Activated CD8-positive, alpha-beta T cell treated with anti-CD3 and anti-CD28 coated beads, Interleukin-2, amount 10 ng/mL, durations not matched to agents 7 days and 5 days (primary cell): ENCODE measurements at regions of chr1 and their contacts with region 1.

Region 1: DNA sequence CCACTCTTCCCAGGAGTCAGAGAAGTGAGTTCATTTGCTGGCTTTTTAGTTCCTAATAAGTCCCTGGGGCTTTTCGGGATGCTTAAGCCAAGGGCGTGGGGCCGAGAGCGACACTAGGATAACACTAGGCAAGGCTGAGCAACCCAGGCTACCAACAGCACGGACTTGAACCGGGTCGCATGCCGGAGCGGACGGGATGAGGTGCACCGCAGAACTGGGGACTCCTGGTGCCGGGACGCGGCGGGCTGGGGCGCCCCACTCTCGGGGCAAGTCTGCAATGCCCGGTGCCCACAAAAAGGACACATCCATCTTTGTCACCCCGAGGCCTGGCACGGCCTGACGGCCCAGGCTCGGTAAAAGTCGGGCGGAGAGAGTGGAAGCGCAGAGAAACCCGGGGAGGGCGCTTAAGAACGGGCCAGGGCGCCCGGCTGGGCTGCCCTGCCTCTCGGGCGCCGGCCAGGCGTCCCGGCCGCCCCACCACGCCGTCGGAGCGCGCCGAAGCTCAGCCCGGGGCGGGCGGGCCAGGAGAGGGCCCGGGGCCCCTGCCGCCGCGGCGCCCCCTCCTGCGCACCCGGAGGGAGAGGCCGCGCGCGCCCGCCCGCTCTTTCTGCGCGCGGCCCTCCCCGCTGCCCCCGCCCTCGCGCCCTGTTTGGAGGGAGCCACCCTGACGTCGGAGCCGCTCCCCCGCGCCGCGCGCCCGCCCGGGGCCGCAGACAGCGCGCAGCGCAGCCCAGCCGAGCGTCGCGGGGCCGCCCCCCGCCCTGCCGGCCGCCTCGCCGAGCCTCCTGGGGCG is at the start of gene NBL1:
- DNase-seq: peak; percentile 82
- ATAC-seq: peak; percentile 87
- H3K4me3 Mint-ChIP-seq: peak within 1 kb of the TSS; percentile 93
- H3K27ac Mint-ChIP-seq: peak within 1 kb of the TSS; percentile 93
- H3K4me1 Mint-ChIP-seq: peaks cover 44% of the 10 kb centered on the region
- H3K27me3 Mint-ChIP-seq: peaks cover 14% of the 10 kb centered on the region
- total RNA-seq, gene NBL1: 40.1 TPM

Region 2: GRCh38 chr1:19606817-19607642 is 36.8 kb before region 1 on chr1:
- CTCF ChIA-PET with region 1: interaction called, 3 read pairs
- POLR2A ChIA-PET with region 1: interaction called, 11 read pairs
- DNase-seq: peak; percentile 83
- ATAC-seq: peak; percentile 79
- H3K4me3 Mint-ChIP-seq: peak overlapping the region; percentile 40
- H3K27ac Mint-ChIP-seq: peak overlapping the region; percentile 37
- H3K4me1 Mint-ChIP-seq: peaks cover 44% of the 10 kb centered on the region
- H3K27me3 Mint-ChIP-seq: no peaks in the 10 kb centered on the region